ENCODE measurements at regions of chr6 and their contacts with region 1.

Region 1: GRCh38 chr6:129893640-129894039 is 32.5 kb upstream of the TMEM244 start:
- DNase-seq: peak in 2 of 4 experiments; percentile 13 to 46
- ATAC-seq: 0 out of 3 replicates have a peak, but pooled peaks have one; percentile 44
- H3K4me3 ChIP-seq: no peak overlapping the region
- H3K27ac ChIP-seq: no peak overlapping the region
- H3K4me1 ChIP-seq: peaks cover 0 to 4% of the 10 kb centered on the region in 2 experiments; a peak in 1 of 5 replicates
- H3K27me3 ChIP-seq: no peaks in the 10 kb centered on the region; a peak in 1 of 5 replicates
- CTCF ChIP-seq: peak in 2 of 3 experiments; percentile 40 to 67; a peak in 3 of 6 replicates
- EP300 ChIP-seq: no peak
- POLR2A ChIP-seq: no peak
- RAD21 ChIP-seq: peak; percentile 36 to 66; a peak in 3 of 4 replicates

Region 2: GRCh38 chr6:129635396-129636130 is 258.1 kb before region 1 on chr6:
- CTCF ChIA-PET with region 1: no interaction called
- POLR2A ChIA-PET with region 1: no interaction called
- in situ Hi-C with region 1: no loop called
- intact Hi-C with region 1: no loop called
- DNase-seq: no peak
- ATAC-seq: no peak
- H3K4me3 ChIP-seq: no peak overlapping the region
- H3K27ac ChIP-seq: no peak overlapping the region
- H3K4me1 ChIP-seq: no peaks in the 10 kb centered on the region; a peak in 1 of 5 replicates
- H3K27me3 ChIP-seq: no peaks in the 10 kb centered on the region
- CTCF ChIP-seq: no peak
- EP300 ChIP-seq: no peak
- POLR2A ChIP-seq: no peak
- RAD21 ChIP-seq: no peak

Region 3: DNA sequence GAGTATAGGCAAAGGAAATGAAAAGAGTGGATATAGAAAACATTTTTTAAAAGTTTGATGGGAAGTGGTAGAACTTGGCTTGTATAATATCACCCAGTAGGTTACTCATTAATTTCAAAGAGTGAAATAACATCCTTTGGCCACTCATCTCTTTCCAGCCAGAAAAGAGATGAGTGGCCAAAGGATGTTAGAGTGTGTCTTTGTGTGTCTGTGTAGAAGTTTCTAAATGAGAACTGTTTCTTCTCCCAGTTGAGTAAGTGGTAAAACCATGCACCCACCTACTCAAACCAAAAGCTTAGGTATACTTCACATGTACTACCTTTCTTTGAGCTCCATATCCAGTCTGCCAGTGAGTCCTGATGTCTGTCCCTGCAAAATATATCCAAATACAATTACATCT is 15.2 kb after region 1 on chr6:
- CTCF ChIA-PET with region 1: no interaction called
- POLR2A ChIA-PET with region 1: no interaction called
- in situ Hi-C with region 1: no loop called
- intact Hi-C with region 1: no loop called
- DNase-seq: no peak
- ATAC-seq: no peak
- H3K4me3 ChIP-seq: no peak overlapping the region
- H3K27ac ChIP-seq: no peak overlapping the region
- H3K4me1 ChIP-seq: no peaks in the 10 kb centered on the region
- H3K27me3 ChIP-seq: no peaks in the 10 kb centered on the region
- CTCF ChIP-seq: no peak
- EP300 ChIP-seq: no peak
- POLR2A ChIP-seq: no peak
- RAD21 ChIP-seq: no peak

Region 4: DNA sequence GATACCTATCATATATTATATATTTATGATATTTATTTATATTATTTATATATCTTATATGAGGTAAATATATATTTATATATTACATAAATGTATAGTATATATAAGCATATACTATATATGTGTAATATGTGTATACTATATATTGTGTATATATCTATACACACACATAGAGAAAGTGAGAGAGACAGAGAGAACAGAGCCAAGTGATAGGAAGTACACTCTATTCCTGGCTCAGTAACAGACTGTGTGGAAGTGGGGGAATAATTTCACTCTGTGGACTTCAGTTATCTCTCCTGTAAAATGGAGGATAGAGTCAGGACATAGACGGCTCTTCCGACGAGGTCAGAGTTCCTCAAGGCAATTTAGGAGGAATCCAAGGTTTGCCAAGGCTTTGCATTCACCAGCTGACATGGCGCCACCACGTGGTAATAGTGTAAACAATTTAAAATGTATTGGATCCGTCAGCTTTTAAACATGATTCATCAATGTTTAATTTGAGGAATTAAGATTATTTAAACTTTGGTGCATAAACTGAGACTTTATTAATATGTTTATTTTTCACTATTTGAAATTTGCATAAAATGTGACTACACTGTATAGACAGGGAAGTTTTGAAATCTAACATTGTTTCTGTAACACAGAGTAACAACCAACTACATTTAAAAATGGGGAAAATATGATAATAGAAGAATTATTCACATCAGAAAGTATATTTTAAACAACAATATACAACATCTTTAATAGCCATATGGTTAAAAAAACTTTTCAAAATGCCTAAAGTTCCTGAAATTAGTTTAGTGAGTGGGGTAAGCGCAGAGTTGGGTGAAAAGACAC is 42.9 kb after region 1 on chr6:
- CTCF ChIA-PET with region 1: interaction called, 4 read pairs
- POLR2A ChIA-PET with region 1: no interaction called
- in situ Hi-C with region 1: no loop called
- intact Hi-C with region 1: loop called (anchors 1 kb)
- DNase-seq: peak; percentile 17 to 83 (median 24)
- ATAC-seq: peak; percentile 92
- H3K4me3 ChIP-seq: no peak overlapping the region
- H3K27ac ChIP-seq: no peak overlapping the region
- H3K4me1 ChIP-seq: no peaks in the 10 kb centered on the region; a peak in 1 of 5 replicates
- H3K27me3 ChIP-seq: no peaks in the 10 kb centered on the region; a peak in 1 of 5 replicates
- CTCF ChIP-seq: peak; percentile 64 to 78 (median 72)
- EP300 ChIP-seq: no peak
- POLR2A ChIP-seq: no peak
- RAD21 ChIP-seq: peak; percentile 77 to 82

Region 5: DNA sequence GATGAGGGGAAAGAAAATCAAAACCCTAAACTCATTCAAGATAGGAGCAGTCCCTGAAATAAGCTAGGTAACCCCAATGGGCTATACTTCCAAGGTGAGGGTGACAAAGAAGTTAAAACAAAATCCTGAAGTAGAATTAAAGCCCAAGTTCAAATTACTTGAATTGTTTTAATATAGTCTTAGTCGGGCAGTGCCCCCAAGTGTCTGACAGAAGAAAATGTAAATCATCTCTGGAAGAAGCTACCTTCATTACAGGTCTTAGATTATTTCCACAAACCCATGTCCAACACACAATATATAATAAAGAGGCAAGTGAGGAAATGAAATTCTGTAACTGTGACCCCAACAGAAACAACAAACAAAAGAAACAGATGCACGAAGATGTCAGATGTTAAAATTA is 88.0 kb after region 1 on chr6:
- CTCF ChIA-PET with region 1: interaction called, 3 read pairs
- POLR2A ChIA-PET with region 1: no interaction called
- in situ Hi-C with region 1: no loop called
- intact Hi-C with region 1: loop called (anchors 2 kb)
- DNase-seq: peak in 1 of 4 experiments; percentile 15
- ATAC-seq: no peak
- H3K4me3 ChIP-seq: no peak overlapping the region
- H3K27ac ChIP-seq: no peak overlapping the region
- H3K4me1 ChIP-seq: no peaks in the 10 kb centered on the region
- H3K27me3 ChIP-seq: 0 out of 5 replicates have a peak, but pooled peaks cover 2 to 4% of the 10 kb centered on the region in 2 experiments
- CTCF ChIP-seq: peak in 2 of 3 experiments; percentile 15 to 36; a peak in 3 of 6 replicates
- EP300 ChIP-seq: no peak
- POLR2A ChIP-seq: no peak
- RAD21 ChIP-seq: peak; percentile 28 to 59; a peak in 3 of 4 replicates

Region 6: DNA sequence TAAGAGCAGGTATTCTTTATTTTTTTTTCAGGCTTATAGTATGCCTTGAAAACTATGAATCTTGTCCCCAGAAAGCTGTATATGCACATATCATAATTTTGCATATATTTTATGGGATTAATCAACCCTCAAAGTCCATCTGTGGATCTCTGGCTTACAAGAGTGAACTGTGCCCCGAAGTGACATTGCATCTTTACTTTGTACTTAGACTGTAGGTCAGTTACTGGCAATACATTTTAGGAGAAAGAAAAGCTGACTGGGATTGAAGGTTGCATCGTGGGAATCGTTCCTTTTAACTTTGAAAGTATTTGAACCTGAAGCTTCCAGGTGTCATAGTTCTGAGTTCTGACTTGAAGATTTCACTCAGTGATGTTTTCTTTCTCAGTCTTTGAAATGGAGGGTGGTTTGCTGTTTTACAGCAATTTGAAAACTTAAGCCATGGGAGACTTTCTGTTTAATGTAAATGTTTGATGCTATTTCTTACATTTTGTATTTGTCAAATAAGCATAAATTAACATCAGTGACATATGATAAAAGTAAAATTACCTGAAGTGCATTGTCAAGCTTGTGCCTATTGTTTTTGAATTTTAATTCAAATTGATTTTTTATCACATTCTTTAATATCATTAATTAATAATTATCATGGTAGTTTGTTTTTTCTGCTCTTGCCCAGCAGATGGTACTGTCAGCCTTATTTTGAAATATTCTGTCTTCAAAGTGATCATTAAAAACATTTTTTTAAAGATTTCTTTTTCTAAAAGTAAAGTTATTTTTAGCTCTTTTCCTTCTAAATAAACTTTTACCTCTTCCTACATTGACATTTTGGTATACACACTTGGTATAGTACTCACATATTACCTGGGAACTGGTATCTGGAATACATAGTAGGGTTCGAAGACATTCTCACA is 153.7 kb after region 1 on chr6:
- CTCF ChIA-PET with region 1: no interaction called
- POLR2A ChIA-PET with region 1: no interaction called
- in situ Hi-C with region 1: no loop called
- intact Hi-C with region 1: no loop called
- DNase-seq: no peak
- ATAC-seq: no peak
- H3K4me3 ChIP-seq: no peak overlapping the region
- H3K27ac ChIP-seq: no peak overlapping the region
- H3K4me1 ChIP-seq: no peaks in the 10 kb centered on the region
- H3K27me3 ChIP-seq: no peaks in the 10 kb centered on the region
- CTCF ChIP-seq: peak in 1 of 3 experiments; percentile 29; a peak in 2 of 6 replicates
- EP300 ChIP-seq: no peak
- POLR2A ChIP-seq: no peak
- RAD21 ChIP-seq: 0 out of 4 replicates have a peak, but pooled peaks of 1 of the 2 experiments have one; percentile 10

Measured in K562 (cell line).